Psoas muscle (tissue), 8 donors: ENCODE measurements at regions of chr19 and their contacts with region 1.

Region 1: DNA sequence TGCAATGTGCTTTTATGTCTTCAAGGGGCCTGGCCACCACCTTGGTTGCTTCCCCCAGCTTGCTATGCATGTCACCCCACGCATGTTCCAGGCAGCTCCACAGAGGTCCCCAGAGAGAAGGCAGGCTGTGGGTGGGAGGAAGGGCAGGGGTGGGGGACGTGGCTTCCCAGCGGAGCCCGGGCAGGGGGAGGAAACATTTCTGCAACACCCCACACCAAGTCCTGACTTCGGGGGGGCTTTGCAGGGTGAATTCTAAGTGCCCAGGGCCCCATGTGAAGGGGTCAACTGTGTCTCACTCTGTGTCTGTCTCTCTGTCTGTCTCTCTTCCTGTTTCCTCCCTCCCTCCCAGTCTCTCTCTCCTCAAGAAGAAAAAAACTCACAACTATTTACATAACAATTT is 39.6 kb downstream of the LTBP4 start:
- DNase-seq: no peak
- ATAC-seq: no peak
- H3K4me3 ChIP-seq: no peak overlapping the region
- H3K27ac ChIP-seq: no peak overlapping the region
- H3K4me1 ChIP-seq: peaks cover 1% of the 10 kb centered on the region
- H3K27me3 ChIP-seq: no peaks in the 10 kb centered on the region
- CTCF ChIP-seq: no peak

Region 2: GRCh38 chr19:40155749-40156265 is 484.9 kb before region 1 on chr19:
- intact Hi-C with region 1: no loop called
- DNase-seq: no peak
- ATAC-seq: no peak
- H3K4me3 ChIP-seq: no peak overlapping the region
- H3K27ac ChIP-seq: no peak overlapping the region
- H3K4me1 ChIP-seq: no peaks in the 10 kb centered on the region
- H3K27me3 ChIP-seq: no peaks in the 10 kb centered on the region
- CTCF ChIP-seq: peak; percentile 10

Region 3: GRCh38 chr19:40603389-40604135 is 37.2 kb before region 1 on chr19:
- intact Hi-C with region 1: loop called in 1 of 2 experiments (anchors 2 kb)
- DNase-seq: peak; percentile 97 to 98
- ATAC-seq: peak; percentile 80 to 85 (median 85)
- H3K4me3 ChIP-seq: peak overlapping the region; percentile 67
- H3K27ac ChIP-seq: peak overlapping the region; percentile 60
- H3K4me1 ChIP-seq: peaks cover 45% of the 10 kb centered on the region
- H3K27me3 ChIP-seq: peaks cover 0 to 22% (median 10%) of the 10 kb centered on the region in 3 donors
- CTCF ChIP-seq: no peak